Thyroid gland (tissue), 4 donors: ENCODE measurements at regions of chr1 and their contacts with region 1.

Region 1: DNA sequence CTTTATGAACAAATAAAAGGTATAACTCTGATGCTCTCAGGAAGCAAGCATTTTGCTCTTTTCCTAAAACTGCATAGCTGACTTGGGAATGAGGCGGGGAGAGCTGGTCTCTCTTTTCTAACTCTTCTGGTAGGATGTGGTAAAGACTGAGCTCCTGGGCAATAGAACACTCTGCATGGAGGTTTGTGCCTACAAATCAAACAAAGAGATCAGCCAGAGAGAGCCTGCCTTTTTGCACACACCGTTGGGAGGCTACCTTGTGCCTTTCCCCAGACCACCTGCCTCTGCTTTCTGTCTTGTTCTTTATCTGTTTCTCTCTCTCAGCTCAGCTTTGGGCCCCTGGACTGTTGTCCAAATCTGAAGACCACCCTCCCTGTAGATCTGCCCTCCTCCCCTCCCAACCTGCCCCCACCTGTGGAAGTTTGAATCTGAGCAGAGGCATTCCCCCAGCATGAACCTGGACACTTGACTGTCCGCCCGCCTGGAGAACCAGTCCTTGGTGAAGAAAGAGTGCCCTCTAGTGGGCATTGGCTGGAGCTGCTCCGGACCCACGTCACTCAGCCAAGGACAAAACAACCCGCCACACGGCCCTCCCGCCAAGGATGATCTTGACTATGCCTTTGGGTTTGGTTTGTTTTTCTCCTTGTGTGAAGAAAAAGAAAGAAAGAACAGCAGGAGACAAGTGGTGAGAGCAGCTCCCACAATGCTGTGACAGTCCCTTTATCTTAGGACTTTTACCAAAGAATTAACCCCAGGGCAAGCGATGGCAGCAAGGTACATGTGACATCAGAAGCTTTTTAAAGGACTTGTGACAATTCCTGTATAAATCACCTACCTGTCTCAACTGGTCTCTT is 228.2 kb downstream of the PBX1 start:
- DNase-seq: peak; percentile 87
- H3K4me3 ChIP-seq: no peak overlapping the region
- H3K27ac ChIP-seq: no peak overlapping the region
- H3K4me1 ChIP-seq: peaks cover 25 to 42% of the 10 kb centered on the region in 2 donors
- H3K27me3 ChIP-seq: no peaks in the 10 kb centered on the region
- CTCF ChIP-seq: peak; percentile 86 to 98 (median 90)
- POLR2A ChIP-seq: no peak

Region 2: GRCh38 chr1:164558461-164559341 is 228.5 kb before region 1 on chr1 and contains the start of gene PBX1:
- intact Hi-C with region 1: loop called (anchors 10 kb)
- DNase-seq: peak; percentile 99
- H3K4me3 ChIP-seq: peak within 1 kb of the TSS; percentile 32 to 85 (median 70)
- H3K27ac ChIP-seq: peak within 1 kb of the TSS; percentile 79 to 94 (median 89)
- H3K4me1 ChIP-seq: peaks cover 7 to 13% of the 10 kb centered on the region in 2 donors
- H3K27me3 ChIP-seq: no peaks in the 10 kb centered on the region
- CTCF ChIP-seq: no peak
- POLR2A ChIP-seq: peak; percentile 89 to 97
- total RNA-seq, gene PBX1: 79.0 to 159 (median 102) TPM

Region 3: GRCh38 chr1:164651351-164651951 is 135.8 kb before region 1 on chr1:
- intact Hi-C with region 1: no loop called
- DNase-seq: no peak
- H3K4me3 ChIP-seq: no peak overlapping the region
- H3K27ac ChIP-seq: no peak overlapping the region
- H3K4me1 ChIP-seq: peaks cover 23% of the 10 kb centered on the region in 2 donors
- H3K27me3 ChIP-seq: no peaks in the 10 kb centered on the region
- CTCF ChIP-seq: no peak
- POLR2A ChIP-seq: no peak

Region 4: DNA sequence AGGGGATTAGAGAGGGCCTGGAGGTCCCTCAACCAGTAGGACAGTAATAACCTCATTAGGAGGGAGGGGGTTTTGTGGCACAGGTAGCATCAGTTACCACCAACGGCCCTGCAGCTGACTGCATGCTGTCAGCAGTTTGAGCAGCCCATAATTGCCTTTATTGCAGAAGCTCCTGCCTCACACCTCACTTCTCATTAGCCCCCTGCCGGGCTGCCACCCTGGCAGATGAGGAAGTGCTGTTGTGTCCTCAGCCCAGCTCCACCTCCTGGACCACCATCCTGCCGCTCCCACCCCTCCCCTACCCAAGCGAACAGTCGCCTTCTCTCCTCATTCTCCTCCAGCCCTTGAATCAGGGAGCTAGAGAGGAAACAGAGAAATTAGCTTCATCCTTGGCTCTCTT is 331.9 kb after region 1 on chr1:
- intact Hi-C with region 1: no loop called
- DNase-seq: no peak
- H3K4me3 ChIP-seq: no peak overlapping the region
- H3K27ac ChIP-seq: no peak overlapping the region
- H3K4me1 ChIP-seq: peaks cover 22 to 25% of the 10 kb centered on the region in 2 donors
- H3K27me3 ChIP-seq: no peaks in the 10 kb centered on the region
- CTCF ChIP-seq: no peak
- POLR2A ChIP-seq: no peak